Heart left ventricle (tissue), 16 donors: ENCODE measurements at regions of chr2 and their contacts with region 1.

Region 1: GRCh38 chr2:203261326-203262159 is 22.7 kb downstream of the CYP20A1 start:
- DNase-seq: no peak
- ATAC-seq: no peak
- H3K4me3 ChIP-seq: no peak overlapping the region
- H3K27ac ChIP-seq: no peak overlapping the region
- H3K4me1 ChIP-seq: no peaks in the 10 kb centered on the region
- H3K27me3 ChIP-seq: no peaks in the 10 kb centered on the region
- CTCF ChIP-seq: no peak
- POLR2A ChIP-seq: no peak

Region 2: DNA sequence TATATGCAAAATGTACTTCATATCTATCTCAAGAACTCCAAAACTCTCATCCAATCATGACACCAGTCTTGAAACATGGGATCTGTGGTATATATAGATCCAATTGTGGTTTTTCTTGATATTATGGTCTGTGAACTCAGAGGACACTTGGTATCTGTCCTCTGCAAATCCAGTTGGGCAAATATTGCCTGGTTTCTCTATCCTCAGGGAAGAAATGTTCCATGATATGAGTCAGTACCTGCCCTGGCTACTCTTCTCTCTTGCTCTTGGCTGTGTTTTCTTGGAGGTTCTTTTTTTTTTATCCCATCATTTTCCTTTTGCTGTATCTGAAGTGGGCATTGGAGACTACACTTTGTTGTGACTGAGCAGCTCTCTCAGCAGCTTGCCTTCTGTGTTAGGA is 236.0 kb before region 1 on chr2:
- intact Hi-C with region 1: no loop called
- DNase-seq: no peak
- ATAC-seq: no peak
- H3K4me3 ChIP-seq: no peak overlapping the region
- H3K27ac ChIP-seq: peak overlapping the region in 3 of 12 donors; percentile 4 to 47 (median 13)
- H3K4me1 ChIP-seq: peaks cover 0 to 45% (median 28%) of the 10 kb centered on the region in 12 donors
- H3K27me3 ChIP-seq: no peaks in the 10 kb centered on the region
- CTCF ChIP-seq: no peak
- POLR2A ChIP-seq: no peak

Region 3: DNA sequence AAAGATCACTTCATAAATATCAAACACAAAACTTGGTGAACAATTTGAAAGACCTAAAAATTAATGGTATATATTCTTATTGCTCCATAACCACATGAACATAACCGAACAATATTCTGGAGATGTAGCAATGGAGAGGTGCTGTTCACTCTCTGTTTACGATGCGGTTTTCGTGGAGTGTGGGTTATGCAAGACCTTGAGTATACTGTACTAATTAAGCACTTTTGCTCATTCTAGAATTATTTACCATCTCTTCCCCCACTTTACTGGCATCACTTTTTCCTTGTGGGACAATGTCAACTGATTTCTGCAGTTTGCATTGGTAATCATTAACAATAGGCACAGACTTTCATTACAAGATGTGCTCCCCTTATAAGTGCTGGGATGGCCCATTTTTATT is 176.0 kb after region 1 on chr2:
- intact Hi-C with region 1: loop called in 1 of 10 experiments (anchors 10 kb)
- DNase-seq: no peak
- ATAC-seq: no peak
- H3K4me3 ChIP-seq: no peak overlapping the region
- H3K27ac ChIP-seq: no peak overlapping the region
- H3K4me1 ChIP-seq: peaks cover 0 to 11% (median 2%) of the 10 kb centered on the region in 12 donors
- H3K27me3 ChIP-seq: no peaks in the 10 kb centered on the region
- CTCF ChIP-seq: no peak
- POLR2A ChIP-seq: no peak

Region 4: GRCh38 chr2:203463266-203463678 is 201.7 kb after region 1 on chr2:
- intact Hi-C with region 1: no loop called
- DNase-seq: no peak
- ATAC-seq: no peak
- H3K4me3 ChIP-seq: no peak overlapping the region
- H3K27ac ChIP-seq: no peak overlapping the region
- H3K4me1 ChIP-seq: peaks cover 0 to 5% (median 0%) of the 10 kb centered on the region in 12 donors
- H3K27me3 ChIP-seq: no peaks in the 10 kb centered on the region
- CTCF ChIP-seq: no peak
- POLR2A ChIP-seq: no peak

Region 5: DNA sequence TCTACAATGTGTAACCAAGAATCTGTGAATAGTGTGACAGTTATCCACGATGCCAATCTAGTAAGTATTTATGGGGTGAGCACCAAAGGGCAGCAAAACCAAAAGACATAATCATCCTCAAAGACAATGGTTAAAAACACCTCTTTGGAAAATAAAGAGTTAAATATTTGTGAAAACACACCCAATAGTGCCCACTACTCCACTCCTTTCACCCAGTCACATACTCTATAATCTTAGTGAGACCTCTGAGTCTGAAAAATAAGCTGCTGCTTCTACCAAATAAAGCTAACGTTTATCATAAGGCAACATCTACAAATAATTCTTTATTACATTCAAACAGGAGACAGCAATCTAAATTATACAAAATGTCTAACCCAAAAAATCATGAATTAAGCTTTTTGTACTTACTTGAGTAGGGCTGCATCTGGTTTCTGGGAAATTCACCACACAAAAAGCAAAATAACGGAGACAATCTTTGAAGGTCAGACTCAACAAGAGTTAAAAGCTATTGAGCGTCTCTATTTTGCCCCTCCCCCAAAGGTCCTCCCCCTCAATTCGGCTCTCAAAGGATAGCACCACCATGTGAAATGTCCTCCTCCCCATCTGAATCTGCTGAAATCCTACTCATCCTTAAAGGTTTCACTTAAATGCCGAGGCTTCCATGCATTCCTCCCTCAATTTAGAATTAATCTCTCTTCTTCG is 271.6 kb after region 1 on chr2:
- intact Hi-C with region 1: no loop called
- DNase-seq: peak in 2 of 5 donors; percentile 28 to 42
- ATAC-seq: no peak
- H3K4me3 ChIP-seq: peak overlapping the region; percentile 65 to 98 (median 96)
- H3K27ac ChIP-seq: peak overlapping the region in 8 of 12 donors; percentile 21 to 98 (median 94)
- H3K4me1 ChIP-seq: peaks cover 0 to 37% (median 16%) of the 10 kb centered on the region in 12 donors
- H3K27me3 ChIP-seq: no peaks in the 10 kb centered on the region
- CTCF ChIP-seq: no peak
- POLR2A ChIP-seq: no peak